Gastrocnemius medialis (tissue), 4 donors: ENCODE measurements at regions of chr5 and their contacts with region 1.

Region 1: DNA sequence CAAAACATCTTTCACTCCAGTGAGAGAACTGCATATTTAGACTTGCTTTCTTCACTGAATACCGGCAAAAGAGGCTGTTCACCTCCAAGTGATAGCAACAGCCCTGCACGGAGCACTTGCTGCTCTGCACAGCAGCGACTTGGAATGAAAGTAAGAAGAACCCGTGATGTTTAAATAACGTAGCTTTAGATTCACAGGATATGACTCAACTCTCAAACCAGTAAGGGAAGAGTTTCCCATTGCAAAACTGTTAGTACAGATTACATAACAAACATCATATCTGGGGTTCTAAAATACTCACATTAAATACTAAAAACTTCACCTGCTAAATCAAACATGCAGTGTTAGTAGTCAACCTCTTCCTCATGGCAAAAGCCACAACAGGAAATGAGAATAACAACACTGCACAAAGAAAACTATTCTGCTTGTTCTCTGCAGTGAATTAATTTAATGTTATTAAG is 203.4 kb downstream of the MCTP1 start:
- DNase-seq: peak in 1 of 2 donors; percentile 11
- ATAC-seq: peak; percentile 39 to 62
- H3K4me3 ChIP-seq: peak overlapping the region; percentile 28 to 50 (median 35)
- H3K27ac ChIP-seq: peak overlapping the region; percentile 16 to 71 (median 58)
- H3K4me1 ChIP-seq: no peaks in the 10 kb centered on the region
- H3K27me3 ChIP-seq: no peaks in the 10 kb centered on the region
- CTCF ChIP-seq: no peak
- POLR2A ChIP-seq: peak; percentile 50 to 78

Region 2: GRCh38 chr5:95130941-95131340 is 49.4 kb after region 1 on chr5:
- in situ Hi-C with region 1: no loop called
- intact Hi-C with region 1: loop called (anchors 10 kb)
- DNase-seq: no peak
- ATAC-seq: no peak
- H3K4me3 ChIP-seq: no peak overlapping the region
- H3K27ac ChIP-seq: no peak overlapping the region
- H3K4me1 ChIP-seq: no peaks in the 10 kb centered on the region
- H3K27me3 ChIP-seq: no peaks in the 10 kb centered on the region
- CTCF ChIP-seq: no peak
- POLR2A ChIP-seq: no peak